ENCODE measurements at regions of chr15 and their contacts with region 1.

Region 1: GRCh38 chr15:92077353-92078085 is 224.0 kb downstream of the SLCO3A1 start:
- DNase-seq: peak; percentile 74 to 87
- H3K4me3 ChIP-seq: no peak overlapping the region
- H3K27ac ChIP-seq: no peak overlapping the region
- H3K4me1 ChIP-seq: peaks cover 5 to 44% (median 15%) of the 10 kb centered on the region in 4 donors
- H3K27me3 ChIP-seq: no peaks in the 10 kb centered on the region
- CTCF ChIP-seq: peak in 5 of 7 experiments; percentile 45 to 70 (median 62)
- EP300 ChIP-seq: no peak
- POLR2A ChIP-seq: no peak

Region 2: GRCh38 chr15:91611561-91612323 is 465.8 kb before region 1 on chr15:
- intact Hi-C with region 1: no loop called
- DNase-seq: no peak
- H3K4me3 ChIP-seq: no peak overlapping the region
- H3K27ac ChIP-seq: no peak overlapping the region
- H3K4me1 ChIP-seq: no peaks in the 10 kb centered on the region
- H3K27me3 ChIP-seq: no peaks in the 10 kb centered on the region
- CTCF ChIP-seq: no peak
- EP300 ChIP-seq: no peak
- POLR2A ChIP-seq: no peak

Region 3: GRCh38 chr15:91706322-91707032 is 371.0 kb before region 1 on chr15:
- intact Hi-C with region 1: loop called (anchors 10 kb)
- DNase-seq: peak; percentile 76 to 88
- H3K4me3 ChIP-seq: no peak overlapping the region
- H3K27ac ChIP-seq: peak overlapping the region in 4 of 5 donors; percentile 16 to 52 (median 40)
- H3K4me1 ChIP-seq: peaks cover 0 to 17% (median 6%) of the 10 kb centered on the region in 4 donors
- H3K27me3 ChIP-seq: no peaks in the 10 kb centered on the region
- CTCF ChIP-seq: peak in 5 of 7 experiments; percentile 44 to 79 (median 63)
- EP300 ChIP-seq: no peak
- POLR2A ChIP-seq: no peak

Measured in stomach (tissue), 19 donors.